ENCODE measurements at regions of chr16 and their contacts with region 1.

Region 1: DNA sequence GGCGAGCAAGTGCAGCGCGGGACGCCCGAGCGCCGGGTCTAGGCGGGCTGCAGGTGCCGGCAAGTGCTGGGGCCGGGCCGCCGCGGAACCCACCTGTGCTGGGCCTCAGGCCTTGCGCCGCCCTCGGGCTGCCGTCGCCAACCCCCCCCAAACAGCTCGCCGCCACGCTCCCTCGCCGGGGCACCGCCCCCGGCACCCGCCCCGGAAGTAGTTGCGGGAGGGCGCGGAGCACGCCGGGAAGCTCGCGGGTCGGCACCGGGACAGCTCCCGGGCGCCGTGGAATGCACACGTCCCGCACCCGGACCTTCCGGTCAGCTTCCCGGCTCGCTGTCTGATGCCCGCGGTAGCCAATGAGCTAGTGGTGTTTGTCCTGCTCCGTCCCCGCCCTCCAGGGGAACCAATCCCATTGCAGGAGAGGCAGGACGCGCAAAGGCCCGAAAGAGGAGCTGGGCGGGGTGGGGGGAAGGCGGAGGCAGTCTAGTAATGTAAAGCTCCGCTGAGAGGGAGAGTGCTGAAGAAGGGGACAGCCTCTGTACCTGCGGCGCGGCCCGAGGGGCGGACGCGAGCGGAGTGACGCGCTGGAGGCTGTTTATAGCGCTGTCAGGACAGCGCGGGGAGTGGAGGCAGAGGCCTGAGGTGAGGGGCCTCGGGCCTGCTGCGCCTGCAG is at the starts of genes ANKS3 and DNAAF8:
- DNase-seq: peak; percentile 81
- H3K4me3 Mint-ChIP-seq: peak within 1 kb of the TSS; percentile 88
- H3K27ac Mint-ChIP-seq: peak within 1 kb of the TSS; percentile 84
- H3K4me1 Mint-ChIP-seq: peaks cover 26% of the 10 kb centered on the region
- H3K27me3 Mint-ChIP-seq: no peaks in the 10 kb centered on the region
- total RNA-seq, gene ANKS3: 21.1 and 25.8 TPM in 2 replicates
- total RNA-seq, gene DNAAF8: not detected in 2 replicates

Region 2: GRCh38 chr16:4425378-4426020 is 308.7 kb before region 1 on chr16 and contains the start of gene DNAJA3:
- intact Hi-C with region 1: loop called (anchors 5 kb)
- DNase-seq: peak; percentile 91
- H3K4me3 Mint-ChIP-seq: peak within 1 kb of the TSS; percentile 98
- H3K27ac Mint-ChIP-seq: peak within 1 kb of the TSS; percentile 100
- H3K4me1 Mint-ChIP-seq: peaks cover 31% of the 10 kb centered on the region
- H3K27me3 Mint-ChIP-seq: peaks cover 3% of the 10 kb centered on the region
- total RNA-seq, gene DNAJA3: 103 and 107 TPM in 2 replicates

Region 3: GRCh38 chr16:4679850-4680636 is 54.2 kb before region 1 on chr16:
- intact Hi-C with region 1: loop called (anchors 5 kb)
- DNase-seq: no peak
- H3K4me3 Mint-ChIP-seq: no peak overlapping the region
- H3K27ac Mint-ChIP-seq: no peak overlapping the region
- H3K4me1 Mint-ChIP-seq: peaks cover 30% of the 10 kb centered on the region
- H3K27me3 Mint-ChIP-seq: no peaks in the 10 kb centered on the region

Region 4: GRCh38 chr16:4693296-4693955 is 40.8 kb before region 1 on chr16 and contains the start of gene NUDT16L1:
- intact Hi-C with region 1: loop called (anchors 2 kb)
- DNase-seq: peak; percentile 98
- H3K4me3 Mint-ChIP-seq: peak within 1 kb of the TSS; percentile 86
- H3K27ac Mint-ChIP-seq: peak within 1 kb of the TSS; percentile 84
- H3K4me1 Mint-ChIP-seq: no peaks in the 10 kb centered on the region
- H3K27me3 Mint-ChIP-seq: no peaks in the 10 kb centered on the region
- total RNA-seq, gene NUDT16L1: 39.9 and 41.9 TPM in 2 replicates

Region 5: DNA sequence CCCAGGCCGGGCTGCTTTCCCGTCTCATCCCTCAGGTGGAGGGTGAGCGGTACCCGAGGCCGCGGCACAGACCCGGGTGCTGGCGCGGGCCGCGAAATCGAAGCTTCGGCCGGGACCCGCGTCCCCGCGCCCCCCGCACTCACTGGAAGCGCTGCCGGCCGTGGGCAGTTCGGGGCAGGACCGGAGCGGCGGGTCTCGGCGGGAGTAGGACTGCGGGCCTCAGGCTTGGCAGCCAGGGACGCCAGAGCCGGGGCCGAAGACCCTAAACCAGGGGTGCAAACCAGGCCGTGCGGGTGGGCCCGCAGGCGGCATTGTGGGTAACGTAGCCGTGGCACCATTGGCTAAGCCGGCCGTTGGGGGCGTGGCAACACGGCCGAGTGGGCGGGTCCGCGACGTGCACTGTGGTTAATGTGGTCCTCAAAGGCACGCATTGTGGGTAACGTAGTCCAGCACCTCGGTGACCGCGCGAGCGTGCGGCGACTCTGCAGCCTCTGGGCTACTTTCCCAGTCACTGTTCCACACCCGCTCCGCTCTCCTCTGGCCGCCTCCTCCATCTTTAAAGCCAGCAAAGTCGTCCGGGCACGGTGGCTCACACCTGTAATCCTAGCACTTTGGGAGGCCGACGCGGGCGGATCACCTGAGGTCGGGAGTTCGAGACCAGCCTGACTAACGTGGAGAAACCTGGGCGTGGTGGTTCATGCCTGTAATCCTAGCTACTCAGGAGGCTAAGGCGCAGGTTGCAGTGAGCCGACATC is 32.9 kb after region 1 on chr16 and contains the start of gene ZNF500:
- intact Hi-C with region 1: loop called (anchors 1 kb)
- DNase-seq: peak; percentile 96
- H3K4me3 Mint-ChIP-seq: peak within 1 kb of the TSS; percentile 95
- H3K27ac Mint-ChIP-seq: peak within 1 kb of the TSS; percentile 87
- H3K4me1 Mint-ChIP-seq: peaks cover 20% of the 10 kb centered on the region
- H3K27me3 Mint-ChIP-seq: no peaks in the 10 kb centered on the region
- total RNA-seq, gene ZNF500: 16.6 and 17.4 TPM in 2 replicates

Region 6: GRCh38 chr16:4802659-4803287 is 68.6 kb after region 1 on chr16:
- intact Hi-C with region 1: loop called (anchors 1 kb)
- DNase-seq: peak; percentile 89
- H3K4me3 Mint-ChIP-seq: peak overlapping the region; percentile 80
- H3K27ac Mint-ChIP-seq: no peak overlapping the region
- H3K4me1 Mint-ChIP-seq: peaks cover 9% of the 10 kb centered on the region
- H3K27me3 Mint-ChIP-seq: no peaks in the 10 kb centered on the region

Region 7: GRCh38 chr16:4957720-4958509 is 223.7 kb after region 1 on chr16 and contains the start of gene SEC14L5:
- intact Hi-C with region 1: loop called (anchors 1 kb)
- DNase-seq: peak; percentile 90
- H3K4me3 Mint-ChIP-seq: peak within 1 kb of the TSS; percentile 85
- H3K27ac Mint-ChIP-seq: peak within 1 kb of the TSS; percentile 26
- H3K4me1 Mint-ChIP-seq: peaks cover 22% of the 10 kb centered on the region
- H3K27me3 Mint-ChIP-seq: peaks cover 21% of the 10 kb centered on the region
- total RNA-seq, gene SEC14L5: not detected in 2 replicates

Region 8: DNA sequence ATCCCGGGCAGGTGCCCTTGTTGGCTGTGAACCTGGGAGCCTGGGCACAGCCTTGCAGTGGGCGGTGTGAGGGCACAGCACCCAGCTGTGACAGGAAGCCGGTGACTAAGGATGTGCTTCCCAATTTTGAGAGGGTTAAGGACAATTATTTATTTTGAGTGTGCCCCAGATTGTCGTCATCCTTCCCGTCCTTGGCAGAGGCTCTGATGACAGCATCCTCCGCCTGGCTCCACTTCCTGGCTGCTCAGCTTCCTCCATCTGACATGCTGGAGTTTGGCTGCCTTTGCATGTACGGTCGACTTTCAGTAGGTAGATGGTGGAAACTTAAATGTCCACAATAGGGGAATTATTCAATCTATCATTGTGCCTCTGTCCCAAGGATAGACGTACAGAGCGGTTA is 645.8 kb after region 1 on chr16:
- intact Hi-C with region 1: no loop called
- DNase-seq: no peak
- H3K4me3 Mint-ChIP-seq: no peak overlapping the region
- H3K27ac Mint-ChIP-seq: no peak overlapping the region
- H3K4me1 Mint-ChIP-seq: no peaks in the 10 kb centered on the region
- H3K27me3 Mint-ChIP-seq: no peaks in the 10 kb centered on the region

Measured in activated T-helper 1 cell treated with anti-CD3 and anti-CD28 coated beads, Interleukin-12 subunit alpha, Interleukin-12 subunit beta, Interleukin-2, Interleukin-4 antibody, amounts not matched to agents 30 ng/mL and 10 ng/mL and 1 ng/mL, durations not matched to agents 14 hours and 24 hours and 36 hours (primary cell).